Activated naive CD4-positive, alpha-beta T cell treated with anti-CD3 and anti-CD28 coated beads for 36 hours (primary cell): ENCODE measurements at regions of chr9 and their contacts with region 1.

Region 1: DNA sequence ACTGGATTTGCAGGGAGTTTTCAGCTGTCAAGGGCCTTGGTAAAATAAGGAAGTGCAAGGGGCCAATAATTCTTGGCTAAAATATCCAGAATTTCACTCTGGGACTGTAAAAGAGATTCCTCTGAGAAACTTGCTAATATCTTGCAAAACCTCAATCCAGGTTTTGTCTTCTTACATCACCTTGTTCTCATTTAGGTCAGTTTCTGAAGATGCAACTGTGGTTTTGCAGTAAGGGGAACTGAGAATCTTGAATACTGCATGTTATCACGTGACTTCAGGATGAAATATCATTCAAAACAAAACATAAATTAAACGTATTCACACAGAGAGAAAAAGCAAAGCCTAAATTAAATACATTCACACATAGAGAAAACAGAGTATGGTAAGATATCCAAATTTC is 35.0 kb upstream of the RIC1 start:
- DNase-seq: no peak
- H3K4me3 Mint-ChIP-seq: no peak overlapping the region
- H3K27ac Mint-ChIP-seq: no peak overlapping the region
- H3K4me1 Mint-ChIP-seq: peaks cover 24% of the 10 kb centered on the region
- H3K27me3 Mint-ChIP-seq: no peaks in the 10 kb centered on the region

Region 2: GRCh38 chr9:5263351-5264218 is 330.3 kb before region 1 on chr9:
- CTCF ChIA-PET with region 1: no interaction called
- intact Hi-C with region 1: loop called (anchors 5 kb)
- DNase-seq: peak; percentile 11
- H3K4me3 Mint-ChIP-seq: no peak overlapping the region
- H3K27ac Mint-ChIP-seq: no peak overlapping the region
- H3K4me1 Mint-ChIP-seq: peaks cover 15% of the 10 kb centered on the region
- H3K27me3 Mint-ChIP-seq: no peaks in the 10 kb centered on the region

Region 3: DNA sequence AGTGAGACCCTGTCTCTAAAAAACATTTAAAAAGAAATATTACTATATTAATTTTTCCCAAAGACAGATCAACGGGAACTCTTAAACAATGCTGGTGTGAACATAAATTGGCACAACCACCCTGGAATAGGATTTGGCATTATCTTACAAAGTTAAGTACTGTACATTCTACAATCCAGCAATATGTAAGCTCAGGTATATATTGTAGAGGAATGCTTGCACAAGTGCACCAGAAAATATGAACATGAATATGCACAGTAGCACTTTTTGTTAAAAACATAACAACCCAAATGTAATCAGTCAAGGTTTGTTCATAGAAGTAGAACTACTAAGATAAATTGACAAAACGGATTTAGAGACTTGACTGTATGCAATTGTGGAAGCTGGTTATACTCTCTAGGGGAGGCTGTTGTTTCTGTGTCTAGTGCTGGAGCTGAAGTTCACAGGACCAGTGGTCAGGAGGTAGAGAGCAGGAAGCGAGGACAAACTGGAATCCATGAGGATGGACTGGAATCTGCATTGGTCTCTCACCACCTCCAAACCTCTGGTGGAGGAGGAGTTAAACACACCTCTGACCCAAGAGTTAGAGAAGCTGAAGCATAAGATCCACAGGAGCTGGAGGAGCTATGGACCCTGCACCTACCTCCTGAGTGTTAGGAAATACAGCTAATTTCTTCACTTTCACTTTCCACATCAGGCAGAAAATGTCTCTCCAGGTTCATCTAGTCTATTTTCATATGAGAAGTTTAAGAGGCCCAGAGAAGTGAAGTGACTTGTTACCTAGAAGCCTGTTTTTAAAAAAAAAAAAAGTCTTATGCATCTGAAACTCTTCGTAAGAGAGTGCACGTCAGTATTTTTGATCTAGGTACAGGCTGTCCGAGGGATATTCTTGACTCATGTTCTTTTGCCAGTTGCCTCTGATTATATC is 14.7 kb after region 1 on chr9:
- CTCF ChIA-PET with region 1: interaction called, 18 read pairs
- intact Hi-C with region 1: no loop called
- DNase-seq: no peak
- H3K4me3 Mint-ChIP-seq: peak overlapping the region; percentile 60
- H3K27ac Mint-ChIP-seq: no peak overlapping the region
- H3K4me1 Mint-ChIP-seq: peaks cover 22% of the 10 kb centered on the region
- H3K27me3 Mint-ChIP-seq: no peaks in the 10 kb centered on the region

Region 4: GRCh38 chr9:5743109-5743508 is 149.2 kb after region 1 on chr9:
- CTCF ChIA-PET with region 1: no interaction called
- intact Hi-C with region 1: no loop called
- DNase-seq: no peak
- H3K4me3 Mint-ChIP-seq: no peak overlapping the region
- H3K27ac Mint-ChIP-seq: no peak overlapping the region
- H3K4me1 Mint-ChIP-seq: peaks cover 3% of the 10 kb centered on the region
- H3K27me3 Mint-ChIP-seq: no peaks in the 10 kb centered on the region